Activated T-helper 1 cell treated with anti-CD3 and anti-CD28 coated beads, Interleukin-12 subunit alpha, Interleukin-12 subunit beta, Interleukin-2, Interleukin-4 antibody, amounts not matched to agents 30 ng/mL and 10 ng/mL and 1 ng/mL, durations not matched to agents 14 hours and 24 hours and 36 hours (primary cell): ENCODE measurements at regions of chr3 and their contacts with region 1.

Region 1: GRCh38 chr3:188320757-188321156 is 166.8 kb downstream of the LPP start:
- DNase-seq: no peak
- H3K4me3 Mint-ChIP-seq: no peak overlapping the region
- H3K27ac Mint-ChIP-seq: no peak overlapping the region
- H3K4me1 Mint-ChIP-seq: peaks cover 49% of the 10 kb centered on the region
- H3K27me3 Mint-ChIP-seq: peaks cover 1% of the 10 kb centered on the region

Region 2: GRCh38 chr3:187841598-187841959 is 479.2 kb before region 1 on chr3:
- intact Hi-C with region 1: no loop called
- DNase-seq: no peak
- H3K4me3 Mint-ChIP-seq: no peak overlapping the region
- H3K27ac Mint-ChIP-seq: no peak overlapping the region
- H3K4me1 Mint-ChIP-seq: no peaks in the 10 kb centered on the region
- H3K27me3 Mint-ChIP-seq: no peaks in the 10 kb centered on the region

Region 3: DNA sequence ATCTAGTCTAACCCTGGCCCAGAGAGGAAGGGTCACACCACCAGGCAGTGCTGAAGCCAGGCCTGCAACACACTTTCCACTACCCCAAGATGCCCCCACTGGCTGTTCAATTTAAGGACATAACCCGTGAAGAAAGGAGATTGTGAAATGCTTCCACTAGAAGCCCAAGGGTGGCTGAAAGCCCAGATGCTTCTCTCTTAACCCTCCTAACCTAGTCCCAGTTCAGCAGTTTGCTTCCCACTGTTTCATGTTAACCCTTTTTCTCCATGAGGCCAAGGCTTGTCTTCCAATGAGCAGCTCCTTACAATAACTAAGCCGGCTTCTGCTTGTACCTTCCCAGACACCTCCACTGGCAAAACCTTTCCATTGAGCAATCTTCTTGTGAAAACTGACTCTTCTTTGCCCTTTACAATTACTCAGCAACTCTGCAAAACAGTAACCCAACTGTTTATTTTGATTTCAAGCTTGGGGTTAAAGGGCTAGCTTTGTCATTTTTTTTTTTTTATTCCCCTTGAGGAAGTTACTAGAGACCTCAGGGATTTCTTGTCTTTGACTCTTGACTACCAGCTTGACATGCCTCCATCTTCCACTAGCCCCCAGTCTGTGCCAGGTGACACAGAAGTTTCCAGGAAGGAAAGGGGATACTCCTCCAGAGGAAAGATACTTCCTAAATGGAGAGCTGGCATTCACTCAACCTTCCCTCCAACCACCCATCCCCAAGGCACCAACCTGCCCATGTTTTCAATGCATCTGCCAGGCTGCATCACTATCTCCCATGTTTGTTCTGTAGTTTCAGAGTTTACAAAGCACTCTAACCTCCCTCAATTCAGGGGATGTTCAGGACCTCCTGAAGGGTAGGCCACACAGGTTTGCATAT is 365.4 kb before region 1 on chr3:
- intact Hi-C with region 1: no loop called
- DNase-seq: no peak
- H3K4me3 Mint-ChIP-seq: no peak overlapping the region
- H3K27ac Mint-ChIP-seq: no peak overlapping the region
- H3K4me1 Mint-ChIP-seq: peaks cover 67% of the 10 kb centered on the region
- H3K27me3 Mint-ChIP-seq: no peaks in the 10 kb centered on the region

Region 4: GRCh38 chr3:187986514-187986934 is 334.2 kb before region 1 on chr3:
- intact Hi-C with region 1: loop called (anchors 5 kb)
- DNase-seq: peak; percentile 34
- H3K4me3 Mint-ChIP-seq: peak overlapping the region; percentile 21
- H3K27ac Mint-ChIP-seq: peak overlapping the region; percentile 82
- H3K4me1 Mint-ChIP-seq: peaks cover 70% of the 10 kb centered on the region
- H3K27me3 Mint-ChIP-seq: no peaks in the 10 kb centered on the region

Region 5: GRCh38 chr3:188294823-188295487 is 25.8 kb before region 1 on chr3:
- intact Hi-C with region 1: loop called (anchors 1 kb)
- DNase-seq: no peak
- H3K4me3 Mint-ChIP-seq: no peak overlapping the region
- H3K27ac Mint-ChIP-seq: peak overlapping the region; percentile 33
- H3K4me1 Mint-ChIP-seq: peaks cover 86% of the 10 kb centered on the region
- H3K27me3 Mint-ChIP-seq: no peaks in the 10 kb centered on the region

Region 6: DNA sequence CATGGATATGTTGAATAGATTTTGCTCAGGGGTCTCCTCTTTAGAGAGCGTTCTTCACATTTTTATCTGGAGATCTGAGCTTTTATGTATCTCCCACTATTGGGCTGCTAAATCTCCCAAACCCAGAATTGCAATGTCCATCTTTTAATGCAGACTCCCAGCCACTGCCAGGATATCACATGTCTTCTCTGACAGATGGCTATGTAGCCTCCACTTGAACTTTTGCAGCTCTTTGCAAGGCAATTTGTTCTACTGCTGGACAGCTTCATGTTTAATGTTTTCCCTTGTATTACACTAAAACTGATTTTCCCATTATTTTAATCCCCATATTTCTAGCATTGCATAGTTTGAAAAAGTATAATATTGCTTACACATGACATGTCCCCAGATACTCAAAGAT is 10.4 kb after region 1 on chr3:
- intact Hi-C with region 1: loop called (anchors 1 kb)
- DNase-seq: no peak
- H3K4me3 Mint-ChIP-seq: no peak overlapping the region
- H3K27ac Mint-ChIP-seq: no peak overlapping the region
- H3K4me1 Mint-ChIP-seq: peaks cover 35% of the 10 kb centered on the region
- H3K27me3 Mint-ChIP-seq: peaks cover 10% of the 10 kb centered on the region